HCT116 (cell line): ENCODE measurements at regions of chr18 and their contacts with region 1.

Region 1: DNA sequence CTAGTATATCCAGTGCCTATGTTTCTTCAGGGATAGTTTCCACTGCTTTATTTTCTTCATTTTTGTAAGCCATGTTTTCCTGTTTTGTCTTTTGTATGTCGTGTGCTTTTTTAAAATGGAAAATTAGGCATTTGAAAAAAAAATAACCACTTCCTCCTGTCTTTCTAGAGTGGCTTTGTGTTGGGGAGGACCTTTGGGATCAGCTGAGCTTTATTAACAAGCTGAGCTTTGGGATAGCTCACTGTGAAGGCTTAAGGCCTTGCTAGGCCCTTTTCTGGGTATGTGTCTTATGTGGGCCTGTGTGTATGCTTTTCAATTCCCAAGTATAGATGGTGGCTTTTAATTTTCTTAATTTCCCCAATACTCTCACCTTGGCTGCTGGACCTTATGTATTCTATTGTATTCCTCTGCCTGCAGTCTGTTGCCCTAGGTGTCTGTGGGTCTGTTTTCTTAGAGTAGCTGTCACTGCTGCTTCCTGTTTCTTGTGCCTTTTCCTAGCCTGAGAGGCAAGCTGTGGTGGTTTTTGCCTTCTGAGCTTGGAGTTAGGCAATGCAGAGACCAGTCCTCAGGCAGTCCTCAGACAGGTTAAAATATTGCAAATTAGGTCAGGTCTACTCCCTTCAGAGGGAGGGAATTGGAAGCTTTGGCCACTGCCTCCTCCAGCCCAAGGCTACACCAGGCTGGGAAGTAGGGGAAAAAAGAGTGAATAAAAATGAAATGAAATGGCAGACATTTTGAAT is 134.7 kb downstream of the LDLRAD4 start:
- DNase-seq: no peak
- ATAC-seq: no peak
- H3K4me3 ChIP-seq: no peak overlapping the region
- H3K27ac ChIP-seq: no peak overlapping the region
- H3K4me1 ChIP-seq: no peaks in the 10 kb centered on the region
- H3K27me3 ChIP-seq: no peaks in the 10 kb centered on the region
- CTCF ChIP-seq: no peak
- POLR2A ChIP-seq: no peak
- RAD21 ChIP-seq: no peak

Region 2: DNA sequence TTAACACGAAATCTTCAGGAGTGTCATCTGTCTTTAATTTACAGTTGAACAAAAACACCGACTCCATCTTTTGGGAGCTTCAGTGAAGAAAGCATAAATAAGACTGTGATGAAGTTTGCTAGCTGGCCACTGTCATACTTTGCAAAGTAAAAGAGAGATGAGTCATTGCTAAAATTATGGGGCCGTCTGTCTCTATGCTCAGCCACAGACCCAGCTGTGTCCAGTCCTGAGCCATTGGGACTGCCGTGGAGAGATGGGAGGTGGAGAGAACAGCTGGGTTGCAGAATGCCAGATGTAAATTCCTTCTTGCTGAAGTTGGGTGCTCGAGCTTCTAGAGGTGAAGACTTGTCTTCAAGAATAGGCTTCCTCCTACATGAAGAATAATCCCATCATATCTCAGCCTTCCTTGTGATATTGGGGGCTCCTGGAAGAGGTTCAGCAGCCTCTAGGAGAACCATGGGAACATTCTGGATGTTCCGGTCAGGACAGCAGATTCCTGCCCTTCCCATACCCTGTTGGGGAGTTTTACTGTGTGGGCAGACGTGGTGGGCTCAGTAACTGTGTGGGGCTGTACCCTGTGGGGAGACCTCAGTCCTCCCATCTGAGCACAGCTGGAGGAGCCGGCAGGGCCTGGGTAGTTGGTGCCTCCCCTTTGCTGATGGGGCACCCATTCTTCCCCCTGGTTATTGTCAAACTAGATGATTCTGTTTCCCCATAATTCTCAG is 63.6 kb before region 1 on chr18:
- CTCF ChIA-PET with region 1: no interaction called
- POLR2A ChIA-PET with region 1: no interaction called
- RAD21 ChIA-PET with region 1: no interaction called
- intact Hi-C with region 1: loop called (anchors 10 kb)
- DNase-seq: no peak
- ATAC-seq: no peak
- H3K4me3 ChIP-seq: no peak overlapping the region
- H3K27ac ChIP-seq: no peak overlapping the region
- H3K4me1 ChIP-seq: no peaks in the 10 kb centered on the region
- H3K27me3 ChIP-seq: 0 out of 2 replicates have a peak, but pooled peaks cover 12% of the 10 kb centered on the region
- CTCF ChIP-seq: no peak
- POLR2A ChIP-seq: no peak
- RAD21 ChIP-seq: no peak

Region 3: GRCh38 chr18:13318731-13319501 is 34.3 kb before region 1 on chr18:
- CTCF ChIA-PET with region 1: no interaction called
- POLR2A ChIA-PET with region 1: no interaction called
- RAD21 ChIA-PET with region 1: no interaction called
- intact Hi-C with region 1: loop called (anchors 5 kb)
- DNase-seq: no peak
- ATAC-seq: no peak
- H3K4me3 ChIP-seq: no peak overlapping the region
- H3K27ac ChIP-seq: no peak overlapping the region
- H3K4me1 ChIP-seq: no peaks in the 10 kb centered on the region
- H3K27me3 ChIP-seq: no peaks in the 10 kb centered on the region
- CTCF ChIP-seq: no peak
- POLR2A ChIP-seq: no peak
- RAD21 ChIP-seq: no peak

Region 4: DNA sequence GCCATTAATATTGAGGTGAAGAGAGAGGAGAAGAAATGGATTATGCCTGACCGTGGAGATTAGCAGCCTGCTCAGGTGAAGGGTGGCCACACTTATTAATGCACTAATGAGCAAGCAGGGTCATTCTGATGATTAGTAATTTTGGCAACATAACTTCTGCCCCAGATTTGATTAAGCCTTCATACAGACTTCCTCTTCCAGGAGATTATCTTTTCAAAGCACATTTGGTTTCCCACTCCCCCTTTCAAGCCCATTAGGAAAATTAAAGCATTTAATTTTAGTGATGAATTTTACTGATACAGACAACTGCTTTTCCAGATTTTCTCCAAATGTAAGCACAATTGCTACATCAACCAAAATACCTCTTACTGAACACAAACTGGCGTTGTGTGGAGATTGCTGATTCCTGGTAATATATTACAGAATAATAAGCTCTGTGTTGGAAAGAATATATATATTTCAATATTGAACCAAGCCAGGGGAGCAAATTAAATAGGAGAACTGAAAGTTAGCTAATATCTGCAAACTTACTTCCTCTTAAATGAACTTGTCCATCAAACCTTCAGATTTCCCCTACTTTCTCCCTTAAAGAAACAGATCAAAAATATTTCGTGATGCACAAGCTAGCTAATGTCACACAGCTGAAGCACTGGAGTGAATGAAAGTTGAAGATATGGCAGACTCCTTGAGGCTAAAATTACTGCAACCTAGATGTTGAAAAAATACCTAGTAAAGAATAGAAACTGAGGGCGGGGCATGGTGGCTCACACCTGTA is 232.3 kb after region 1 on chr18:
- CTCF ChIA-PET with region 1: no interaction called
- POLR2A ChIA-PET with region 1: no interaction called
- RAD21 ChIA-PET with region 1: no interaction called
- intact Hi-C with region 1: no loop called
- DNase-seq: no peak
- ATAC-seq: no peak
- H3K4me3 ChIP-seq: no peak overlapping the region
- H3K27ac ChIP-seq: no peak overlapping the region
- H3K4me1 ChIP-seq: no peaks in the 10 kb centered on the region
- H3K27me3 ChIP-seq: no peaks in the 10 kb centered on the region
- CTCF ChIP-seq: no peak
- POLR2A ChIP-seq: no peak
- RAD21 ChIP-seq: no peak